ENCODE measurements at regions of chr10 and their contacts with region 1.

Region 1: GRCh38 chr10:97792141-97792721 is 20.4 kb upstream of the SFRP5 start:
- H3K4me3 ChIP-seq: no peak overlapping the region
- H3K27ac ChIP-seq: no peak overlapping the region
- H3K4me1 ChIP-seq: no peaks in the 10 kb centered on the region
- CTCF ChIP-seq: peak; percentile 84

Region 2: GRCh38 chr10:97483506-97483905 is 308.7 kb before region 1 on chr10:
- CTCF ChIA-PET with region 1: no interaction called
- POLR2A ChIA-PET with region 1: no interaction called
- H3K4me3 ChIP-seq: no peak overlapping the region
- H3K27ac ChIP-seq: no peak overlapping the region
- H3K4me1 ChIP-seq: no peaks in the 10 kb centered on the region
- CTCF ChIP-seq: no peak

Region 3: GRCh38 chr10:97673736-97674525 is 118.3 kb before region 1 on chr10:
- CTCF ChIA-PET with region 1: no interaction called
- POLR2A ChIA-PET with region 1: no interaction called
- H3K4me3 ChIP-seq: no peak overlapping the region
- H3K27ac ChIP-seq: no peak overlapping the region
- H3K4me1 ChIP-seq: no peaks in the 10 kb centered on the region
- CTCF ChIP-seq: no peak

Region 4: GRCh38 chr10:97780841-97781617 is 11.2 kb before region 1 on chr10:
- CTCF ChIA-PET with region 1: interaction called, 29 read pairs
- POLR2A ChIA-PET with region 1: no interaction called
- H3K4me3 ChIP-seq: no peak overlapping the region
- H3K27ac ChIP-seq: no peak overlapping the region; the same call in 1 of the 2 replicates
- H3K4me1 ChIP-seq: peaks cover 10% of the 10 kb centered on the region; the same call in 1 of the 2 replicates
- CTCF ChIP-seq: no peak

Region 5: GRCh38 chr10:97810446-97810845 is 18.2 kb after region 1 on chr10:
- CTCF ChIA-PET with region 1: interaction called, 18 read pairs
- POLR2A ChIA-PET with region 1: no interaction called
- H3K4me3 ChIP-seq: no peak overlapping the region
- H3K27ac ChIP-seq: no peak overlapping the region
- H3K4me1 ChIP-seq: no peaks in the 10 kb centered on the region
- CTCF ChIP-seq: no peak

Region 6: DNA sequence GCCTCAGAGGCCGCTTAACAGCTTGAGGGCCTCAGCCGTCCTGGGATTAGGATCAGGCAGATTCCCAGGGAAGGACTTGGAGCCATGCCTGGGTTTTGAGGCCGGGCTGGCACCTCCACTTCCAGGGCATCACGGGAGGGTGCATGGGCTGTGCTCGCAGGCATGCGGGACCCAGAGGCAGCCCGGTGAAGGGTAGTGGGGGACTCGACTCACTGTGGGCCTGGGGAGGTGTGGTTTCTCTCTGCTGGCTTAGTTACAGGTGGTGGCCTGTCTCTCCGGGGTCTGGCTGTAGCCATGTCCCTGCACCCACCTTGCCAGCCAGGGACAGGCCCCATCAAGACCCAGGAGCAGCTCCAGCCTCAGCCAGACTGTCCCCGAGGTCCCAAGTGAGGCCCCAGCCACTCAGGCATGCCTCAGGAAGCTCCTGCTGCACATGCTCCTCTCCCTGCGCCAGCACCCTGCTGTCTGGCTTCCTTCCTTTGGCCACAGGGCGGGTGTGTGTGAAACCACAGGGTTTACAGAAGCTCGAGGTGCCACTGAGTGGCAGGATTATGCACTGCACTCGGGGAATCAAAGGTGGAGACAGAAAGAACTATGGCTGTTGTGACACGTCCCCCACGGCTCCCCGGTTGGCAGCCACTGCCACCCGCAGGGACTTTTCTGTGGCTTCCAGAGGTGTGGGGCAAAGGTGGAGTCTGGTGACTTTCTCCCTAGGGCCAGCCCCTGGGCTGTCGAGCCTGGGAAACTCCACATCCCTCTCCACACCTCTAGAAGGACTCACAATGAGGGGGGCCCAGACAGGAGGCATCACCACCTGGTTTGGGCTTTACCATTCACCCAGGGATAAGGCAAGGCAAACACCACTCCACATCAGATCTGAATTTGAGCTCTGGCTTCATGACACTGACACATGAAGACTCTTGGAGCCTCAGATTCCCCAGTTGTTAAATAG is 77.1 kb after region 1 on chr10:
- CTCF ChIA-PET with region 1: interaction called, 167 read pairs
- POLR2A ChIA-PET with region 1: interaction called, 4 read pairs
- H3K4me3 ChIP-seq: no peak overlapping the region
- H3K27ac ChIP-seq: peak overlapping the region; percentile 20; the same call in 1 of the 2 replicates
- H3K4me1 ChIP-seq: peaks cover 3% of the 10 kb centered on the region; the same call in 1 of the 2 replicates
- CTCF ChIP-seq: peak; percentile 96

Region 7: GRCh38 chr10:98028168-98028770 is 236.0 kb after region 1 on chr10:
- CTCF ChIA-PET with region 1: interaction called, 12 read pairs
- POLR2A ChIA-PET with region 1: no interaction called
- H3K4me3 ChIP-seq: no peak overlapping the region
- H3K27ac ChIP-seq: no peak overlapping the region
- H3K4me1 ChIP-seq: no peaks in the 10 kb centered on the region; the same call in 1 of the 2 replicates
- CTCF ChIP-seq: peak; percentile 85

Measured in HEK293 (cell line).